ENCODE measurements at regions of chr12 and their contacts with region 1.

Region 1: GRCh38 chr12:111298582-111299436 is 70.1 kb downstream of the PHETA1 start:
- DNase-seq: peak; percentile 85
- ATAC-seq: peak; percentile 91
- H3K4me3 Mint-ChIP-seq: no peak overlapping the region
- H3K27ac Mint-ChIP-seq: no peak overlapping the region
- H3K4me1 Mint-ChIP-seq: peaks cover 9% of the 10 kb centered on the region; the same call in 1 of the 2 replicates
- H3K27me3 Mint-ChIP-seq: no peaks in the 10 kb centered on the region
- CTCF ChIP-seq: peak; percentile 80

Region 2: GRCh38 chr12:110896559-110896958 is 402.2 kb before region 1 on chr12:
- CTCF ChIA-PET with region 1: interaction called, 15 read pairs
- POLR2A ChIA-PET with region 1: no interaction called
- DNase-seq: no peak
- ATAC-seq: no peak
- H3K4me3 Mint-ChIP-seq: no peak overlapping the region
- H3K27ac Mint-ChIP-seq: no peak overlapping the region
- H3K4me1 Mint-ChIP-seq: peaks cover 7% of the 10 kb centered on the region
- H3K27me3 Mint-ChIP-seq: no peaks in the 10 kb centered on the region; the same call in 1 of the 2 replicates
- CTCF ChIP-seq: no peak

Region 3: DNA sequence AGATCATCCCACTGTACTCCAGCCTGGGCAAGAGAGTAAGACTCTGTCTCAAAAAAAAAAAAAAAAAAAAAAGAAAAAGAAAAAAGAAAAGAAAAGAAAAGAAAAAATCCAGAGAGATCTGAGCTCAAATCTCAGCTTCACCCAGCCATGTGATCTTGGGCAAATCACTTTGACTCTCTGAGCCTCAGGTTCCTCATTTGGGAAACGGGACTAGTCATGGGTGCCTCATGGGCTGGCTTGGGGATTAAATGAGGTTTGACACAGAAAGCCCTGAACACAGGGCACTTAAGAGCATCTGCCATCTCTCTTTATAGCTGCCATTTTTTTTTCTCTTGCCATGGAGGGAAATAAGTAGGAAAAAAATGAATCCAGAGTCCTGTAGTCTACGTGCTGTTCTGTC is 292.2 kb before region 1 on chr12:
- CTCF ChIA-PET with region 1: interaction called, 10 read pairs
- POLR2A ChIA-PET with region 1: no interaction called
- DNase-seq: no peak
- ATAC-seq: no peak
- H3K4me3 Mint-ChIP-seq: no peak overlapping the region
- H3K27ac Mint-ChIP-seq: no peak overlapping the region
- H3K4me1 Mint-ChIP-seq: no peaks in the 10 kb centered on the region
- H3K27me3 Mint-ChIP-seq: peaks cover 60% of the 10 kb centered on the region
- CTCF ChIP-seq: no peak

Region 4: GRCh38 chr12:111196532-111196931 is 102.3 kb before region 1 on chr12:
- CTCF ChIA-PET with region 1: interaction called, 11 read pairs
- POLR2A ChIA-PET with region 1: no interaction called
- DNase-seq: no peak
- ATAC-seq: no peak
- H3K4me3 Mint-ChIP-seq: no peak overlapping the region
- H3K27ac Mint-ChIP-seq: no peak overlapping the region
- H3K4me1 Mint-ChIP-seq: peaks cover 37% of the 10 kb centered on the region
- H3K27me3 Mint-ChIP-seq: no peaks in the 10 kb centered on the region
- CTCF ChIP-seq: no peak

Region 5: DNA sequence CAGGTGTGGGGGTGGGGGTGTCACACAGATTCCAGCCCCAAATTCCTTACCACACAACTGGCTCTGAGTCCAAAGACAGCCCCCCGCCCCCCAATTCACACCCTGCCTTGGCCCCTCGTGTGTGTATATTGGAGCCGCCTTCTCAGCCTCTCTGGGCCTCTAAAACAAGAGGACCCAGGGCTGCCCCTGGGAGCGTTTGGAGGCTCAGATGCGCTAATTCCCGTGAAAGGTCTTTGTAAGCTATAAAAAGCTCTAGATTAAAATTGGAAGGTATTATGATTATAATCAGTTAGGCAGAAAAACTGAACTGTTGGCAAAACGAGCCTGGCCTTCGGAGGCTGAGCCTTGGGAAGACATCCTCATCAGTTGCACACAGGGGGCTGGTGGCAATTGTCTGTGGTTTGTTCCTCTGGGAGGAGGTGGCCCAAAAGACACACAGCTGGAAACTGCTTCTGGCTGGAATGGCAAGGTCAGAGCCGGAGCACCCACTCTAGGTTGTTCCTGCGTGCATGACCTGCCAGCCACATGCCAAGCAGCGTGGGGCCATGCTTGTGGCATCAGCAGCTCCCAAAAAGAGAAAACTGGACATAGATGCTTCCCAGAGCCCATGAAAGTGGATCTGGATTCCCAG is 48.4 kb before region 1 on chr12:
- CTCF ChIA-PET with region 1: interaction called, 15 read pairs
- POLR2A ChIA-PET with region 1: no interaction called
- DNase-seq: no peak
- ATAC-seq: no peak
- H3K4me3 Mint-ChIP-seq: no peak overlapping the region
- H3K27ac Mint-ChIP-seq: no peak overlapping the region
- H3K4me1 Mint-ChIP-seq: no peaks in the 10 kb centered on the region
- H3K27me3 Mint-ChIP-seq: 0 out of 2 replicates have a peak, but pooled peaks cover 5% of the 10 kb centered on the region
- CTCF ChIP-seq: no peak

Region 6: GRCh38 chr12:111268738-111269572 is 29.9 kb before region 1 on chr12:
- CTCF ChIA-PET with region 1: interaction called, 188 read pairs
- POLR2A ChIA-PET with region 1: no interaction called
- DNase-seq: peak; percentile 65
- ATAC-seq: peak; percentile 67; the same call in 1 of the 2 replicates
- H3K4me3 Mint-ChIP-seq: no peak overlapping the region
- H3K27ac Mint-ChIP-seq: no peak overlapping the region
- H3K4me1 Mint-ChIP-seq: no peaks in the 10 kb centered on the region
- H3K27me3 Mint-ChIP-seq: no peaks in the 10 kb centered on the region
- CTCF ChIP-seq: peak; percentile 81

Region 7: DNA sequence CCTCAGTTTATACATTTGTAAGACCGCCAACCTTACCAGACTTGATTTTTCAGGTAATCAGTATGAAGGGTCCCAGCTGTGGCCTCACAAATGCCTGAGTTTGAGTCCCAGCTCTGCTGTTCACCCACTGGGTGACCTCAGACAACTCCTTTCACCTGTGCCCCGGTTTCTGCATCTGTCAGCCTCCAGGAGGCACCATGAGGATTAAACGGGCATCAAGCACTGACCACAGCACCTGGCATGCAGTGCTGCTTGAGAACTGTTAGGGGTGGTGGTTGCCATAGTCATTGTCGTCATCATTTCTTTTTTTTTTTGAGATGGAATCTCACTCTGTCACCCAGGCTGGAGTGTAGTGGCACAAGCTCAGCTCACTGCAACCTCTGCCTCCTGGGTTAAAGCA is 12.2 kb after region 1 on chr12:
- CTCF ChIA-PET with region 1: interaction called, 20 read pairs
- POLR2A ChIA-PET with region 1: no interaction called
- DNase-seq: no peak
- ATAC-seq: no peak
- H3K4me3 Mint-ChIP-seq: no peak overlapping the region
- H3K27ac Mint-ChIP-seq: no peak overlapping the region
- H3K4me1 Mint-ChIP-seq: 0 out of 2 replicates have a peak, but pooled peaks cover 3% of the 10 kb centered on the region
- H3K27me3 Mint-ChIP-seq: no peaks in the 10 kb centered on the region; the same call in 1 of the 2 replicates
- CTCF ChIP-seq: no peak

Measured in WTC11 (cell line).